Activated naive CD8-positive, alpha-beta T cell treated with anti-CD3 and anti-CD28 coated beads, Interleukin-2, amount 10 ng/mL, durations not matched to agents 7 days and 5 days (primary cell): ENCODE measurements at regions of chr2 and their contacts with region 1.

Region 1: GRCh38 chr2:151409601-151410484 is at the start of gene RIF1:
- DNase-seq: peak; percentile 82
- ATAC-seq: peak; percentile 90
- H3K4me3 Mint-ChIP-seq: peak within 1 kb of the TSS; percentile 93
- H3K27ac Mint-ChIP-seq: peak within 1 kb of the TSS; percentile 89
- H3K4me1 Mint-ChIP-seq: peaks cover 22% of the 10 kb centered on the region
- H3K27me3 Mint-ChIP-seq: peaks cover 3% of the 10 kb centered on the region
- total RNA-seq, gene RIF1: 59.4 to 61.9 TPM

Region 2: GRCh38 chr2:151261231-151261976 is 148.4 kb before region 1 on chr2 and contains the start of gene RBM43:
- POLR2A ChIA-PET with region 1: interaction called, 11 read pairs
- DNase-seq: peak; percentile 89
- ATAC-seq: peak; percentile 95
- H3K4me3 Mint-ChIP-seq: peak within 1 kb of the TSS; percentile 97
- H3K27ac Mint-ChIP-seq: peak within 1 kb of the TSS; percentile 99
- H3K4me1 Mint-ChIP-seq: peaks cover 21% of the 10 kb centered on the region
- H3K27me3 Mint-ChIP-seq: no peaks in the 10 kb centered on the region
- total RNA-seq, gene RBM43: 11.6 to 13.0 TPM

Region 3: DNA sequence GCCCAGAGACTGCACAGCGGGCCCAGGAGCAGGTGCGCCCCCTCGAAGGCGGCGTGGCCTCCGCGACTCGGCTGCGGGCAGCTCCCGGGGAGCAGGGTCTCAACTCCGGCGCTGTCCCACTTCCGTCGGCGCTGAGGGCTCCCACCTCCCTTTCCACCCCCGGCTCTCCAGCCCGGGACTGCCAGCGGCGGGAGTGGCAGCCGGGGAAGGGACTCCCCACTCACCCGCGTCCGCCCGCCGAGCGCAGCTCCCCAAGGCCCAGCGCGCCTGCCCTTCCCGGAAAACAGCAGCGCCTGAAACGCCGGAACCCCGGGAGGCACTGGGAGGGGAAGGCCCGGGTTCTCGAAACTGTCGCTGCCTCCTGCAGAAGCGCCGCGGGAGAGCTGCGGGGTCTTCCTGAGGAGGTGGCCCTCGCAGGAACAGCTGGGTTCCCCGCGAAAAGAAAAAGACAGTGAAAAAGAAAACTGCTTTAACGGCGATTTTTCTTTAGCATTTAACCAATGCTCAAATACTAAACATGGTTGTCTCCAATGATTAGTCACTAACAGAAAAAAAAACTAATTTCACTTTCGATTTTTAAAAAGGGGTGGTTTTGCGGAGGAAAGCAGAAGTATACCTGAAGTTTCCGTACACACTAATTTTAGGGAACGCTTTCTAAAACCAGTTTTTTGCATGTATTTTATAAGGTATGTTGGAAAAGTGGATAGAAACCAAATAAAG is 120.3 kb before region 1 on chr2 and contains the start of gene NMI:
- POLR2A ChIA-PET with region 1: interaction called, 27 read pairs
- DNase-seq: peak; percentile 82
- ATAC-seq: peak; percentile 70
- H3K4me3 Mint-ChIP-seq: peak within 1 kb of the TSS; percentile 95
- H3K27ac Mint-ChIP-seq: peak within 1 kb of the TSS; percentile 98
- H3K4me1 Mint-ChIP-seq: peaks cover 37% of the 10 kb centered on the region
- H3K27me3 Mint-ChIP-seq: peaks cover 4% of the 10 kb centered on the region
- total RNA-seq, gene NMI: 56.0 to 57.1 TPM

Region 4: DNA sequence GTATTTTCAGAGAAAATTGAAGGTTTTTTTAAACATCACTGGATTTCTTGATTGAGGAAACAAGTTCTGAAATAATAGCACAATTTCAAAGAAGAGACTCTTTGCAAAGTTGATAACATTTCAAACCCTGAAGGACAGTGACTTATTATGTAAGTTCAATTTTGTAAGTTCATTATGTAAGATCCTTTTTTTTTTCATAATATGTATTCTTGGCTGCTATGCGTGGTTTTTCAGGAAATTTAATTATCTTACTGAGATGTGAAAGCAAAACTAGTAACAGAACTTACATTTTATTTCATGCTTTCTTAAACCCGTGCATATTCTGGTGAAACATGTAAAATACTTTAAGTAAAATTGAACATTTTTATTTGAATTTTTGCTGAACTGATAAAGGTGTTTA is 65.2 kb after region 1 on chr2:
- POLR2A ChIA-PET with region 1: no interaction called
- DNase-seq: no peak
- ATAC-seq: no peak
- H3K4me3 Mint-ChIP-seq: no peak overlapping the region
- H3K27ac Mint-ChIP-seq: no peak overlapping the region
- H3K4me1 Mint-ChIP-seq: peaks cover 4% of the 10 kb centered on the region
- H3K27me3 Mint-ChIP-seq: no peaks in the 10 kb centered on the region